Activated CD4-positive, alpha-beta T cell treated with anti-CD3 and anti-CD28 coated beads, Interleukin-2, amount 10 ng/mL, durations not matched to agents 7 days and 5 days (primary cell): ENCODE measurements at regions of chr6 and their contacts with region 1.

Region 1: DNA sequence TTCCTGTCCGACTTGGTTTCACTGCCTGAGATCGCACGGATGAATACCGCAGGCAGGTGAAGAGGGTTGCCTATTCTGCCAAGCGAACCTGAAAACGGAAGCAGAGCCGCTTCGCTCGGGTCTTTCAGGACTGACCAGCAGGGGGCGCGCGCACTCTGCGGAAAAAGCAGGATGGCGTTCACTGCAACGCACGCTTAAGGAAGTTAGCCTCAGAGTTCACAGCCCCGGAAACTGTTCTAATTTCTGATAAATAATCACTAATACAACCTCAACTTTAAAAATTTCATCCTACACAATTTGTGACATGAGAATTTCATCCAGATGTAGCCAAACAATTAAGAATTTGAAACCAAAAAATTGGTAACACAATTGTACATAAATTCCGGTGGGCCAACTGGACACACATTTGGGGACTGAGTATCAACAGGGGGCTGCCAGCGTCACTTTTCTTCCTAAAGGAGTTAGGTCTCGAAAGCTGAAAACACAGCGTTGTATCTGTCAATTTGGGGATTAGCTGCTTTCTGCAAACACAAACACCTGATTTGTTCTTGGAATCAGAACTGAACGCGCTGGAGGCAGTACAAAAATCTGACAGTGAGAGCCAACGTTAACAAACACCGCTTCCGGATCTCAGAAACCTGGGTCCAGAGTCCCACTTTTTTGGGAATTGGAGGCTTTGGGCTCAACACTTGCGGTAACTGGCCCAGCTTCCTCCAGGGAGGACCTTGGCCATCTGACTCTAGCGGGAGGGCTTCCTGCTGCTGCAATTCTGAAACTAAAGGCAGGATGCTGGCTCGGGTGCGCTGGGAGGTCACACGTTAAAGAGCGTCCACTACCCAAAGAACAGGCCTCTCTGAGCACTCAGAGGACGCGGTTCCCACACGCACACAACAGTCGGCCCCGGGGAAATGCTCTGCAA is 8.8 kb downstream of the PXDC1 start:
- DNase-seq: peak; percentile 90
- H3K4me3 Mint-ChIP-seq: no peak overlapping the region
- H3K27ac Mint-ChIP-seq: no peak overlapping the region
- H3K4me1 Mint-ChIP-seq: peaks cover 11% of the 10 kb centered on the region
- H3K27me3 Mint-ChIP-seq: peaks cover 5% of the 10 kb centered on the region

Region 2: DNA sequence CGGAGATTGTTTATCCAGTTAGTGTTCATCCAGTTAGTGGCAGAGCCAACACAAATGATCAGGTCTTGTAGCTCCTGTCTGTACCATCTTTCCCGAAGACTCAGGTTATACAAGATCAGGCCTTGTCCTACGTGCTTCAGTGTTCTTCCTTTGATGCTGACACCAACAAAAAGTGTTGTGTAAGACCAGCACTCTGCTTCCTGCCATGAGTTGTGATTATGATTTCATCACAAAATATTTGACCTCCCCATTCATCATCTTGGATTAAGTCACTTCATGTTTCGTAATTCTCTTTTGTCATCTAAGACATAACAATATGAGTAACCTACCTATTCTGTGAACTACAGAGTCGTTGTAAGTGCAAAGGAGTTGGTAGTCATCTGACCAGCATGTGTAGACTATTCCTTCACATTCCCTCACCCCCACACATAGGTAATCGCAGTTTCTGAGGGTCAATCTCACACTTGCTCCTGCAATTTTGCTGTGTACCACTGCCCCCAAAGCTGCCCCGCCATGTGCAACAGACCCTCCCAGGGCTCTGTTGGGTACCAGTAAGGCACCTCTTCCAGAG is 150.2 kb before region 1 on chr6:
- CTCF ChIA-PET with region 1: no interaction called
- POLR2A ChIA-PET with region 1: no interaction called
- DNase-seq: no peak
- H3K4me3 Mint-ChIP-seq: no peak overlapping the region
- H3K27ac Mint-ChIP-seq: no peak overlapping the region
- H3K4me1 Mint-ChIP-seq: no peaks in the 10 kb centered on the region
- H3K27me3 Mint-ChIP-seq: peaks cover 13% of the 10 kb centered on the region

Region 3: GRCh38 chr6:3732345-3733141 is 10.1 kb before region 1 on chr6:
- CTCF ChIA-PET with region 1: interaction called, 10 read pairs
- POLR2A ChIA-PET with region 1: no interaction called
- DNase-seq: peak; percentile 70
- H3K4me3 Mint-ChIP-seq: no peak overlapping the region
- H3K27ac Mint-ChIP-seq: no peak overlapping the region
- H3K4me1 Mint-ChIP-seq: peaks cover 3% of the 10 kb centered on the region
- H3K27me3 Mint-ChIP-seq: peaks cover 3% of the 10 kb centered on the region